Right ventricle myocardium superior (tissue), 1 donor: ENCODE measurements at regions of chr3 and their contacts with region 1.

Region 1: GRCh38 chr3:197186887-197187588 is 111.4 kb downstream of the DLG1 start:
- DNase-seq: no peak
- ATAC-seq: peak; percentile 66

Region 2: DNA sequence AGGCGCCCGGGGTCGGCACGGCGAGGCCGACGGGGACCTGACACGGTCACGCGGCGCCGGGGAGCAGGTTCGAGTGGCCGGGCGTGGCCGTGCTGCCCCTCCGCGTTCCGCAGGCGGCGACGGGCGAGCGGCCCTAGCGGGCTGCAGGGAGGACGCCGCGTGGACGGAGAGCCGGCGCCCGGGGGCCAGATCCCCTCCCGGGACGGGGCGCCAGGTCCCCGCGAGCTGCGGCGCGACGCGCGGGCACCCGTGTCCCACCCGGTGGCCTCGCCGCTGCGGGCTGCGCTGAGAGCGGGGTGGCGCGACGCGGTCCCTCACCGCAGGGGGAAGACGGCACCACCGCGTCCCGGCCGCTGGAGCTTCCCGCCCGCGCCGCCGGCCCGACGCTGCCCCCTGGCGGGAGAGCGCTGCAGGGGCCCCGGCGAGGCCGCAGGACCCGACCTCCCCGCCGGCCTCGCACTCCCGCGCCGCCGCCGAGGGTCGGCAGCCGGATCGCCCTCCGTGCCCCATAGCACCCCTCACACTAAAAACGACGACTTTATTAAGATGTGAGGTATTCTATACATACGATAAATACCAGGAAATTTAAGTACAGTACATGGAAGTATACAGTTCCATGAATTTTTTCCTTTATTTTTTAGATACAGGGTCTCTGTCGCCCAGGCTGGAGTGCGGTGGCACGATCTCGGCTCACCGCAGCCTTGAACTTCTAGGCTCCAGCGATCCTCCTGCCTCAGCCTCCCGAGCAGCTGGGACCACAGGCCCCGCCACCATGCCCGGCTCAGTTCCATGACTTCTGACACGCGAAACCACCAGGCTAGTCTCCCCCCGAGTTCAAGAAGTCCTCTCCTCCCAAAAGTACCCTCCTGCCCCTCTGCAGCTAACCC is 217.1 kb before region 1 on chr3:
- intact Hi-C with region 1: loop called (anchors 10 kb)
- DNase-seq: peak; percentile 80
- ATAC-seq: peak; percentile 91

Region 3: DNA sequence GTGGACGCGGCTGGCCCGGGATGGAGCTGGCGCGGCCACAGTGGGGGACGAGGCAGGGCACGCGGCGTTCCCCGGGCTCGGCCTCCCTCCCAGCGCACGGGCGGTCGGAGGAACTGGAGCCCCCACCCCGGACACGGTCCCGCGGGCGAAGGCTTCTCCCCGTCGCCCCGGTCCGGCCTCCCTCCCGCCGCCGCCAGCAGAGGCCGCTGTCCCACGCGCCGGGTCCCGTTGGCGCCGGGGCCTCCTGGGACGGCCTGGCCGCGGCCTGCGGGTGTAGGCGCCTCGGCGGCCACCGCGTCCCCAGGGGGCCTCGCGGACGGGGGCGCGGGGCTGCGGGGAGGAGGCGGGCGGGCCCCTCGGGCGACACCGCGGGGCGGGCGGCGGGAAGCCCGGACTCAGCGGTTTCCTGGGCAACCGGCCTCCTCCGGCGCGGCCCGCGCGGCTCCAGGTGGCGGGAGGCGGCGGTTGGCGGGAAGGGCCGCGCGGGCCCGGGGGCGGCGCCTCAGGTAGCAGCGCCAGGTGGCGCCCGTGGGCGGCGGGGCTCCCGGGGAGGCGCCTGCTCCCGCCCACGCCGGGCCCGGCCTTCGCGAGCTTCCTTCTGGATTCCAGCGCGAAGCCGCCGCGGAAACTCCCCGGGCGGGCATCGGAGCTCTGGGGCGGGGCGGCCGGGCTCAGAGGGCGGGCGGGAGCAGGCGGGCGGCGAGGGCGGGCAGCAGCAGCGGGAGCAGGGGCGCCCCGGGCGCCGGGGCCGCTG is 184.2 kb before region 1 on chr3:
- intact Hi-C with region 1: loop called (anchors 5 kb)
- DNase-seq: peak; percentile 85
- ATAC-seq: peak; percentile 94